Activated CD8-positive, alpha-beta T cell treated with anti-CD3 and anti-CD28 coated beads for 36 hours (primary cell): ENCODE measurements at regions of chr4 and their contacts with region 1.

Region 1: GRCh38 chr4:128468123-128468989 is 180.7 kb upstream of the PGRMC2 start:
- DNase-seq: no peak
- ATAC-seq: no peak
- H3K4me3 Mint-ChIP-seq: no peak overlapping the region
- H3K27ac Mint-ChIP-seq: no peak overlapping the region
- H3K4me1 Mint-ChIP-seq: no peaks in the 10 kb centered on the region
- H3K27me3 Mint-ChIP-seq: no peaks in the 10 kb centered on the region
- CTCF ChIP-seq: no peak

Region 2: GRCh38 chr4:128454281-128455075 is 13.9 kb before region 1 on chr4:
- CTCF ChIA-PET with region 1: interaction called, 13 read pairs
- POLR2A ChIA-PET with region 1: interaction called, 5 read pairs
- intact Hi-C with region 1: no loop called
- DNase-seq: peak; percentile 88
- ATAC-seq: peak; percentile 99
- H3K4me3 Mint-ChIP-seq: no peak overlapping the region
- H3K27ac Mint-ChIP-seq: no peak overlapping the region
- H3K4me1 Mint-ChIP-seq: peaks cover 12% of the 10 kb centered on the region
- H3K27me3 Mint-ChIP-seq: peaks cover 3% of the 10 kb centered on the region
- CTCF ChIP-seq: peak; percentile 67